ENCODE measurements at regions of chr20 and their contacts with region 1.

Region 1: GRCh38 chr20:20824924-20825584 is 112.6 kb upstream of the RALGAPA2 start:
- DNase-seq: peak; percentile 55
- ATAC-seq: peak; percentile 75
- H3K4me3 ChIP-seq: no peak overlapping the region
- H3K27ac ChIP-seq: no peak overlapping the region
- H3K4me1 ChIP-seq: no peaks in the 10 kb centered on the region
- H3K27me3 ChIP-seq: peaks cover 46% of the 10 kb centered on the region
- CTCF ChIP-seq: peak; percentile 89

Region 2: GRCh38 chr20:20593447-20594170 is 231.4 kb before region 1 on chr20:
- CTCF ChIA-PET with region 1: interaction called, 3 read pairs
- POLR2A ChIA-PET with region 1: no interaction called
- intact Hi-C with region 1: loop called (anchors 1 kb)
- DNase-seq: peak; percentile 62
- ATAC-seq: peak; percentile 81
- H3K4me3 ChIP-seq: no peak overlapping the region
- H3K27ac ChIP-seq: no peak overlapping the region
- H3K4me1 ChIP-seq: no peaks in the 10 kb centered on the region
- H3K27me3 ChIP-seq: no peaks in the 10 kb centered on the region
- CTCF ChIP-seq: peak; percentile 86

Region 3: GRCh38 chr20:20664795-20665589 is 160.1 kb before region 1 on chr20:
- CTCF ChIA-PET with region 1: no interaction called
- POLR2A ChIA-PET with region 1: no interaction called
- intact Hi-C with region 1: loop called (anchors 1 kb)
- DNase-seq: peak; percentile 56
- ATAC-seq: peak; percentile 98
- H3K4me3 ChIP-seq: no peak overlapping the region
- H3K27ac ChIP-seq: no peak overlapping the region
- H3K4me1 ChIP-seq: no peaks in the 10 kb centered on the region
- H3K27me3 ChIP-seq: no peaks in the 10 kb centered on the region
- CTCF ChIP-seq: peak; percentile 80

Region 4: GRCh38 chr20:20864351-20865096 is 39.5 kb after region 1 on chr20:
- CTCF ChIA-PET with region 1: no interaction called
- POLR2A ChIA-PET with region 1: no interaction called
- intact Hi-C with region 1: no loop called
- DNase-seq: peak; percentile 51
- ATAC-seq: peak; percentile 59
- H3K4me3 ChIP-seq: no peak overlapping the region
- H3K27ac ChIP-seq: no peak overlapping the region
- H3K4me1 ChIP-seq: no peaks in the 10 kb centered on the region
- H3K27me3 ChIP-seq: peaks cover 49% of the 10 kb centered on the region
- CTCF ChIP-seq: peak; percentile 64

Region 5: DNA sequence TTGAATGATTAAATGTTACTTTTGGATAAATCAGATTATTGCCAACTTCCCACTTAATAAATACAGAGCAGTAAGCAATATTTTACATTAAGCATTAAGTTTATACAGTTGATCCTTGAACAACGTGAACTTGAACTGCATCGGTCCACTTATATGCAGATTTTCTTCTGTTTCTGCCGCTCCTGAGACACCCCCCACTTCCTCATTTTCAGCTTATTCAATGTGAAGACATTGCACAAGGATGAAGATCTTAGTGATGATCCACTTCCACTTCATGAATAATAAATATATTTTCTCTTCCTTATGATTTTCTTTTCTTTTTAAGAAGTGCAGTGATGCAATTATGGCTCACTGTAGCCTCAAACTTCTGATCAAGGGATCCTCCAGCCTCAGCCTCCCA is 114.0 kb after region 1 on chr20:
- CTCF ChIA-PET with region 1: no interaction called
- POLR2A ChIA-PET with region 1: no interaction called
- intact Hi-C with region 1: no loop called
- DNase-seq: no peak
- ATAC-seq: no peak
- H3K4me3 ChIP-seq: no peak overlapping the region
- H3K27ac ChIP-seq: no peak overlapping the region
- H3K4me1 ChIP-seq: no peaks in the 10 kb centered on the region
- H3K27me3 ChIP-seq: peaks cover 34% of the 10 kb centered on the region
- CTCF ChIP-seq: no peak

Measured in PC-3 (cell line).